ENCODE measurements at regions of chr18 and their contacts with region 1.

Region 1: DNA sequence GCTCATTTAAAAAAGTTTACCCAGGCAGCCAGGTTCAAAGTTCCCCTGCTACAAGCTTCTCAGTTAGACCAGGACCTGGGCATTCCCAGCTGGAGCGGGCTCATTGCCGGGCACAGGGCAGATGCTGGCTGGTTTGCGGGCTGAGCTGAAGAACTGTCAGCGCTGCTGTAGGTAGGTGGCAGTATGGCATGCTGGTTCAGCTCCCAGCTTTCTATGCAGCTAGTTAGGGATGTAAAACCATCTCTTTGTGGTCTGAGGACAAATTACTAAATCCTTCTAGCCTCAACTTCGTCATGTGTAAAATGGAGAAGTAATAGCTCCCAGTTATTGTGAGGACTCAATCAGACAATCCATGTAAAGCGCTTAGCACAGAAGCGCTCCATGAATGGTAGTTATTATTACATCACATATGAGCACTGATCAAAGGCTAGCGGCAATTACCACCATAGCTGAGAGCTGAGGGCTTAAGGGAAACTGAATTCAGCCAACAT is 2.4 kb upstream of the LDLRAD4 start:
- DNase-seq: peak; percentile 64 to 78
- ATAC-seq: peak; percentile 42 to 78 (median 74)
- H3K4me3 ChIP-seq: peak overlapping the region in 2 of 10 donors; percentile 75 to 96
- H3K27ac ChIP-seq: peak overlapping the region in 8 of 10 donors; percentile 68 to 98 (median 94)
- H3K4me1 ChIP-seq: peaks cover 5 to 36% (median 33%) of the 10 kb centered on the region in 9 donors
- H3K27me3 ChIP-seq: peaks cover 0 to 29% (median 0%) of the 10 kb centered on the region in 7 donors
- CTCF ChIP-seq: peak; percentile 49 to 91 (median 69)

Region 2: DNA sequence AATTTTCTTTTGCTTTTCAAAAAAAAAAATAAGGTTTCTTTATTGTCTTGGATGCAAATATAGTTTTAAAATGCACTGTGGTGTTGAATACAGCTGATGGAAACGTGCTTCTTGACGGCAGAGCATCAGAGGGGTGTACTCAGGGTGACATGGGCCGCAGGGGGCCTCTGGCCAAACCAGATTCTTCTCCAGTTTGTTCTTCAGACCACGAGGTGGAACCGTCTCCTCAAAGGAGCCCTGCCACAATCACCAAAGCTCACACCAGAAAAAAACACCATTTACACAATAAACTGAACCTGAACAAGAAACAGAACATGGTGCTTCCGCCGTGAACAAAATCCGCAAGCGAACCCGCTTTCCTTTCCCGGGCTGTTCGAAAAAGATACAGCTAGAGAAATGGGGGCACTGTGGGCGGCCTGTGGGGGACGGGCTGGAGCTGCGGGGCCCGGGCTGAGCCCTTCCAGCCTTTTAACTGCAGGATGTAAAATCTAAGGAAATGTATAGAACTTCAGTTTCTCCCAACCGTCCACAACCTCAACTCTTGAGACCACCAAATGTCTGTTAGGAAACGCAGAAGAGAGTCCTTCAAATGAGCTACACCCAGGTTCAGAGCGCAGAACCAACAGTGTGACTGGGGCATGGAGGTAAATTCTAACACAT is 478.8 kb before region 1 on chr18:
- intact Hi-C with region 1: no loop called
- DNase-seq: no peak
- ATAC-seq: no peak
- H3K4me3 ChIP-seq: no peak overlapping the region
- H3K27ac ChIP-seq: no peak overlapping the region
- H3K4me1 ChIP-seq: no peaks in the 10 kb centered on the region
- H3K27me3 ChIP-seq: no peaks in the 10 kb centered on the region
- CTCF ChIP-seq: no peak

Region 3: DNA sequence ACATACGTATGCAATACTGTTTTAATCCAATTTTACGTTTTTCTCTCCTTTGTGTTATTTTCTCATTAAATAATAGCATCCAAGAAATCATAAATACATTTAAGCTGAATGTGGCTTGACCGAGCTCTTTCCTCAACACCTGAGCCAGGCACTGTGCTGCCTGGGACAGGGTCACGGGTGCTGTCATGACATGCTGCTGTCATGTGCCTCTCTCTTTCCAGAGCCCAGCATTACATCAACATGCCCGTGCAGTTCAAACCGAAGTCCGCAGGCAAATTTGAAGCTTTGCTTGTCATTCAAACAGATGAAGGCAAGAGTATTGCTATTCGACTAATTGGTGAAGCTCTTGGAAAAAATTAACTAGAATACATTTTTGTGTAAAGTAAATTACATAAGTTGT is 91.7 kb before region 1 on chr18:
- intact Hi-C with region 1: no loop called
- DNase-seq: no peak
- ATAC-seq: peak in 2 of 8 donors; percentile 44 to 77
- H3K4me3 ChIP-seq: no peak overlapping the region
- H3K27ac ChIP-seq: no peak overlapping the region
- H3K4me1 ChIP-seq: peaks cover 0 to 11% (median 2%) of the 10 kb centered on the region in 9 donors
- H3K27me3 ChIP-seq: no peaks in the 10 kb centered on the region
- CTCF ChIP-seq: no peak

Region 4: DNA sequence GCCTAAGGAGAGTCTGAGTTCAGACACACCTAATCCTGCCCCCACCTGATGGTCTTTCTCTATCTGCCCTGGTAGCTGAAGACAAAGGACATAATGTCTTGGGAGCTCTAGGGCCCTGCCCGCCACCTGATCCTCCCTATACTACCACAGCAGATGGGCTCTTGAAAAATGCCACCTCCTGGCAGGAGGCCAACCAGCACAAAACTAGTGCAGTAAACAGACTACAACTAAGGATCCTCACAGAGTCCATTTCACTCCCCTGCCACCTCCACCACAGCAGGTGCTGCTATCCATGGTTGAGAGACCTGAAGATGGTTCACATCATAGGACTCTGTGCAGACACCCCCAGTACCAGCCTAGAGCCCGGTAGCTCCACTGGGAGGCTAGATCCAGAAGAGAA is 50.1 kb before region 1 on chr18:
- intact Hi-C with region 1: no loop called
- DNase-seq: no peak
- ATAC-seq: no peak
- H3K4me3 ChIP-seq: no peak overlapping the region
- H3K27ac ChIP-seq: no peak overlapping the region
- H3K4me1 ChIP-seq: no peaks in the 10 kb centered on the region
- H3K27me3 ChIP-seq: peaks cover 0 to 5% (median 0%) of the 10 kb centered on the region in 7 donors
- CTCF ChIP-seq: no peak

Region 5: DNA sequence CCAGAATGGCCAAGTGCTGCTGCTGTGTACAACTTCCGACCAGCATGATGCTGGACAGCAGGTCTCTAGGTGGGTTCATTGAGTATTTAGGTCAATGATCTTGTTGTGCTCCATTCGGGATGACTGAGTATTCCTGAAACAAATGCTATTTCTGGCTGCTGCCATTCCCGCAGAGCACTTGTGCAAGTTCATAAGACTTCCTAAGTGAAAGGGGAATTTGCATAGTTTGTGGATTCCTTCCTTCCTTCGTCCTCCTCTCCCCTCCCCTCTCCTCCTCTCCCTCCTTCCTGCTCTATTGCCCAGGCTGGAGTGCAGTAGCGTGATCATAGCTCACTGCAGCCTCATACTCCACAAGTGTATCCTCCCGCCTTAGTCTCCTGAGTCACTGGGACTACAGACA is 42.8 kb after region 1 on chr18:
- intact Hi-C with region 1: no loop called
- DNase-seq: no peak
- ATAC-seq: peak in 5 of 8 donors; percentile 23 to 51 (median 40)
- H3K4me3 ChIP-seq: no peak overlapping the region
- H3K27ac ChIP-seq: no peak overlapping the region
- H3K4me1 ChIP-seq: peaks cover 22 to 46% (median 38%) of the 10 kb centered on the region in 9 donors
- H3K27me3 ChIP-seq: no peaks in the 10 kb centered on the region
- CTCF ChIP-seq: no peak

Region 6: GRCh38 chr18:13308369-13308768 is 92.2 kb after region 1 on chr18:
- intact Hi-C with region 1: loop called in 4 of 10 experiments (anchors 5 to 10 kb)
- DNase-seq: no peak
- ATAC-seq: no peak
- H3K4me3 ChIP-seq: no peak overlapping the region
- H3K27ac ChIP-seq: no peak overlapping the region
- H3K4me1 ChIP-seq: peaks cover 4 to 28% (median 10%) of the 10 kb centered on the region in 9 donors
- H3K27me3 ChIP-seq: no peaks in the 10 kb centered on the region
- CTCF ChIP-seq: no peak

Region 7: DNA sequence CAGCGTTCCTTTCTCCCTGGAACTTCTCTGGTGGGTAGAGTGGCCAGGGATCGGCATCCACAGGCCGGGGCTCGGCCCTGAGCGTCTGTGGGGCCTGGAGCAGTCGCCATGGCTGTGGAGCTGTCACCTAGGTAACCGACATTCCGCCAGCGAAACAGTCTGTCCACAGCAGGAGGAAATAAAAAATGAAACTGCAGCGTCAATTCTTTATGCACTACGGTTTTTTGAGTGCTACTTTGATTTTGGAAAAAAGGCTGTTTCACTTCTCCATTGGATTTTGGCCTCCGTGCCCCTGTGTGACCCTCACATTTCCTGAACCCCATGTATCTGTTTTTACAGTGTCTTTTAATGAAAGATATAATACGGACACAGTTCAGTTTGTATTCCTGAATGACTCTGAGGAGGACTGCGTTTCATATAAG is 165.8 kb after region 1 on chr18:
- intact Hi-C with region 1: loop called in 6 of 10 experiments (anchors 2 to 10 kb)
- DNase-seq: peak; percentile 69 to 84
- ATAC-seq: peak; percentile 70 to 90 (median 84)
- H3K4me3 ChIP-seq: peak overlapping the region in 8 of 10 donors; percentile 21 to 46 (median 36)
- H3K27ac ChIP-seq: peak overlapping the region; percentile 74 to 92 (median 82)
- H3K4me1 ChIP-seq: peaks cover 15 to 81% (median 58%) of the 10 kb centered on the region in 9 donors
- H3K27me3 ChIP-seq: no peaks in the 10 kb centered on the region
- CTCF ChIP-seq: no peak

Region 8: DNA sequence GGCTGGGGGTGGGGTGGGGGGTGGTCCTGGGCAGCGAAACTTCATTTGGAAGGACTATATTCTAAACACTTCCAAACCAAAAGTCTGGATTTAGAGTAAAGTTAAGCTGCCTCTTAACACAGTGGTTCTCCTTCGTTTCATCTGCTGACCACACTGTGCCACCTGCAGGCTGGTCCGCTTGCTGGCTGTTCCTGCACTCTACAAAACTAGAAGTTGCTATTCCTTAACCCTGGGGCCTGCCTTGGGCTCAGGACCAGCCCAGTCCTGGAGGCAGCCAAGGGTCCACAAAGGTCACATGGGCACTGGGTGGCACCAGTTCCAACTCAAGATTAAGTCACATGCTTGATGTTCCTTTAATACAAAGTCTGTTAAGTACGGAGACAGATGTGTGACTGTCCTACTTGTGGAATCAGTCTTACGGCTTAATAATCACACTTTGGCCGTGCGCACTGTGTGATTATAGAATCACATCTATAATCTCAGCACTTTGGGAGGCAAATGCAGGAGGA is 314.8 kb after region 1 on chr18:
- intact Hi-C with region 1: loop called (anchors 1 to 5 kb)
- DNase-seq: peak; percentile 59 to 62
- ATAC-seq: peak; percentile 77 to 93 (median 90)
- H3K4me3 ChIP-seq: no peak overlapping the region
- H3K27ac ChIP-seq: peak overlapping the region in 3 of 10 donors; percentile 31 to 66 (median 49)
- H3K4me1 ChIP-seq: peaks cover 0 to 20% (median 13%) of the 10 kb centered on the region in 9 donors
- H3K27me3 ChIP-seq: no peaks in the 10 kb centered on the region
- CTCF ChIP-seq: peak; percentile 14 to 72 (median 55)

Region 9: GRCh38 chr18:13726232-13726971 is 510.3 kb after region 1 on chr18 and contains the starts of genes FAM210A and RNMT:
- intact Hi-C with region 1: loop called in 2 of 10 experiments (anchors 2 to 5 kb)
- DNase-seq: peak; percentile 96
- ATAC-seq: peak; percentile 97 to 99 (median 98)
- H3K4me3 ChIP-seq: peak within 1 kb of the TSS; percentile 75 to 95 (median 85)
- H3K27ac ChIP-seq: peak within 1 kb of the TSS; percentile 81 to 97 (median 94)
- H3K4me1 ChIP-seq: peaks cover 0 to 49% (median 28%) of the 10 kb centered on the region in 9 donors
- H3K27me3 ChIP-seq: no peaks in the 10 kb centered on the region
- CTCF ChIP-seq: peak in 4 of 9 donors; percentile 12 to 57 (median 48)
- total RNA-seq, gene FAM210A: 41.6 to 84.8 (median 58.2) TPM
- total RNA-seq, gene RNMT: 21.1 to 37.0 (median 34.2) TPM

Measured in heart right ventricle (tissue), 16 donors.